Panc1 (cell line): ENCODE measurements at regions of chr1 and their contacts with region 1.

Region 1: GRCh38 chr1:156860113-156860627 is 495 bp upstream of the NTRK1 start:
- DNase-seq: no peak
- ATAC-seq: peak; percentile 80
- H3K4me3 ChIP-seq: peak overlapping the region; percentile 39 to 65
- H3K27ac ChIP-seq: no peak overlapping the region
- H3K4me1 ChIP-seq: peaks cover 13% of the 10 kb centered on the region
- H3K27me3 ChIP-seq: no peaks in the 10 kb centered on the region; the same call in 1 of the 2 replicates
- CTCF ChIP-seq: peak; percentile 97

Region 2: GRCh38 chr1:156725683-156726280 is 134.4 kb before region 1 on chr1:
- CTCF ChIA-PET with region 1: interaction called, 27 read pairs
- POLR2A ChIA-PET with region 1: interaction called, 3 read pairs
- in situ Hi-C with region 1: no loop called
- intact Hi-C with region 1: loop called (anchors 2 kb)
- DNase-seq: peak; percentile 77
- ATAC-seq: peak; percentile 78
- H3K4me3 ChIP-seq: peak overlapping the region; percentile 87 to 99
- H3K27ac ChIP-seq: peak overlapping the region; percentile 87
- H3K4me1 ChIP-seq: peaks cover 33% of the 10 kb centered on the region
- H3K27me3 ChIP-seq: no peaks in the 10 kb centered on the region
- CTCF ChIP-seq: peak; percentile 91

Region 3: GRCh38 chr1:156797212-156797871 is 62.8 kb before region 1 on chr1:
- CTCF ChIA-PET with region 1: interaction called, 7 read pairs
- POLR2A ChIA-PET with region 1: interaction called, 3 read pairs
- in situ Hi-C with region 1: no loop called
- intact Hi-C with region 1: loop called (anchors 2 kb)
- DNase-seq: peak; percentile 45
- ATAC-seq: peak; percentile 83
- H3K4me3 ChIP-seq: no peak overlapping the region
- H3K27ac ChIP-seq: no peak overlapping the region
- H3K4me1 ChIP-seq: no peaks in the 10 kb centered on the region
- H3K27me3 ChIP-seq: no peaks in the 10 kb centered on the region
- CTCF ChIP-seq: peak; percentile 86

Region 4: GRCh38 chr1:156838981-156839410 is 21.2 kb before region 1 on chr1:
- CTCF ChIA-PET with region 1: interaction called, 39 read pairs
- POLR2A ChIA-PET with region 1: no interaction called
- in situ Hi-C with region 1: no loop called
- intact Hi-C with region 1: no loop called
- DNase-seq: peak; percentile 27
- ATAC-seq: peak; percentile 79
- H3K4me3 ChIP-seq: no peak overlapping the region
- H3K27ac ChIP-seq: no peak overlapping the region
- H3K4me1 ChIP-seq: no peaks in the 10 kb centered on the region
- H3K27me3 ChIP-seq: peaks cover 2% of the 10 kb centered on the region
- CTCF ChIP-seq: peak; percentile 96

Region 5: DNA sequence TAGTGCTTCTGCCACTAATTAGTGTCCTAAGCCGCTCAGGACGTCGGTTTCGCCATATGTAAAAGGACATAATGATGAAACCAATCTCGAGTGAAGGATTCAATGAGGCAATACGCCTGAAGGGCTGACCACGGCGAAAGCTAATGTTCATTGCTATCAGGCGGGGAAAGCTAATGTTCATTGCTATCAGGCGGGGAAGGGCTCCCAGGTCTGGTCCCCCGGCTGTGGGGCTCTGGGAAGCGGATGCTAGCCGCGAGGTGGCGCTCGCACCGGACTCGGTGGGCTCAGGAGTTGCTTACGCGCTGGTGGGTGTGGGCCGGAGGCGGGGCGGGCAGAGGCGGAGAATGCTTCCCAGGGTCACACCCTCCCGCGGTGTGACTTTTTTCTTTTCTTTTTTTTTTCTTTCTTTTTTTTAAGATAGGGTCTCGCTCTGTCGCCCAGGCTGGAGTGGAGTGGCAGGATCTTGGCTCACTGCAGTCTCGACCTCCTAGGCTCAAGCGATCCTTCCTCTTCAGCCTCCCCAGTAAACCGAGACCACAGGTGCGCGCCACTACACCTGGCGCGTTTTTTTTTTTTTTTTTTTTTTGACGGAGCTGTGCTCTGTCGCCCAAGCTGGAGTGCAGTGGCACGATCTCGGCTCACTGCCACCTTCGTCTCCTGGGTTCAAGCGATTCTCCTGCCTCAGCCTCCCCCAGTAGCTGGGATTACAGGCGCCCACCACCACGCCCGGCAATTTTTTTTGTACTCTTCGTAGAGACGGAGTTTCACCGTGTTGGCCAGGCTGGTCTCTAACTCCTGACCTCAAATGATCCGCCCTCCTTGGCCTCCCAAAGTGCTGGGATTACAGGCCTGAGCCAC is 32.2 kb after region 1 on chr1:
- CTCF ChIA-PET with region 1: interaction called, 10 read pairs
- POLR2A ChIA-PET with region 1: interaction called, 6 read pairs
- in situ Hi-C with region 1: no loop called
- intact Hi-C with region 1: no loop called
- DNase-seq: no peak
- ATAC-seq: peak; percentile 83
- H3K4me3 ChIP-seq: peak overlapping the region; percentile 31 to 62
- H3K27ac ChIP-seq: peak overlapping the region; percentile 56; the same call in 1 of the 2 replicates
- H3K4me1 ChIP-seq: peaks cover 42% of the 10 kb centered on the region
- H3K27me3 ChIP-seq: no peaks in the 10 kb centered on the region
- CTCF ChIP-seq: peak; percentile 95

Region 6: DNA sequence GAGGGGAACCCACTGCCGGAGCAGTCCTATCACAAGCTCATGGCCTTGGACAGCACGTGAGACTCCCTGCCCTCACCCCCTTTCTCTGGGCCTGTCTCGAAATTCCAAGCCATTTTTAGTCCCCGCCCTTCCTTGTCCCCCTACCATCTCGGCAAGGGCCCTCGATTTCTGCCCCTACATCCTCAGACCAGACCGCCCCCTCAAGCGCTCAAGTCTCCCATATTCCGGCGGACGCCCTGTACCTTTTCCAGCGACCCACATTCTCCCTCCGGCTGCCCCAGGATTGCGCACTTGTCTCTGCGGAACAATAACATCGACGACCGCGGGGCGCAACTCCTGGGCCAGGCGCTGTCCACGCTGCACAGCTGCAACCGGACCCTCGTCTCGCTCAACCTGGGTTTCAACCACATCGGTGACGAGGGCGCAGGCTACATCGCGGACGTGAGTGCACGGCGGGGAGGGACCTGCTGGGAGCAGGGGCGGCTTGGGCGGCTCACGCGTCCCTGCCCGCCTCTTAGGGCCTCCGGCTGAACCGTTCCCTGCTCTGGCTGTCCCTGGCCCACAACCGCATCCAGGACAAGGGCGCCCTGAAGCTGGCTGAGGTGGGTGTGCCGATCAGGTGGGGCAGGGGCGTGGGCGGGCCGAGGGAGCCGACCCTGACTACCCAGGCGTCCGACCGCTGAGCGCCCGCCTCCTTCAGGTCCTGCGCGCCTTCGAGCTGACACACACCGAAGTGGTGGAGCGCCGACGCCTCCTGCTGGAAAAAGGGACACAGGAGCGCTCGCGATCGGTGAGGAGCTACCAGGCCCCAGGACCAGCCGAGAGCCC is 67.3 kb after region 1 on chr1:
- CTCF ChIA-PET with region 1: interaction called, 4 read pairs
- POLR2A ChIA-PET with region 1: no interaction called
- in situ Hi-C with region 1: no loop called
- intact Hi-C with region 1: loop called (anchors 10 kb)
- DNase-seq: peak; percentile 39
- ATAC-seq: peak; percentile 93
- H3K4me3 ChIP-seq: peak overlapping the region; percentile 50 to 60
- H3K27ac ChIP-seq: peak overlapping the region; percentile 44; the same call in 1 of the 2 replicates
- H3K4me1 ChIP-seq: peaks cover 3% of the 10 kb centered on the region; the same call in 1 of the 2 replicates
- H3K27me3 ChIP-seq: no peaks in the 10 kb centered on the region
- CTCF ChIP-seq: peak; percentile 97

Region 7: GRCh38 chr1:156970017-156970416 is 109.8 kb after region 1 on chr1:
- CTCF ChIA-PET with region 1: no interaction called
- POLR2A ChIA-PET with region 1: no interaction called
- in situ Hi-C with region 1: no loop called
- intact Hi-C with region 1: no loop called
- DNase-seq: no peak
- ATAC-seq: no peak
- H3K4me3 ChIP-seq: no peak overlapping the region
- H3K27ac ChIP-seq: no peak overlapping the region
- H3K4me1 ChIP-seq: no peaks in the 10 kb centered on the region
- H3K27me3 ChIP-seq: no peaks in the 10 kb centered on the region
- CTCF ChIP-seq: peak; percentile 28; the same call in 1 of the 2 replicates

Region 8: GRCh38 chr1:157019457-157019856 is 159.3 kb after region 1 on chr1:
- CTCF ChIA-PET with region 1: interaction called, 17 read pairs
- POLR2A ChIA-PET with region 1: no interaction called
- in situ Hi-C with region 1: no loop called
- intact Hi-C with region 1: no loop called
- DNase-seq: no peak
- ATAC-seq: no peak
- H3K4me3 ChIP-seq: no peak overlapping the region
- H3K27ac ChIP-seq: no peak overlapping the region
- H3K4me1 ChIP-seq: no peaks in the 10 kb centered on the region
- H3K27me3 ChIP-seq: no peaks in the 10 kb centered on the region
- CTCF ChIP-seq: no peak

Region 9: GRCh38 chr1:157124855-157125254 is 264.7 kb after region 1 on chr1:
- CTCF ChIA-PET with region 1: no interaction called
- POLR2A ChIA-PET with region 1: no interaction called
- in situ Hi-C with region 1: no loop called
- intact Hi-C with region 1: no loop called
- DNase-seq: no peak
- ATAC-seq: no peak
- H3K4me3 ChIP-seq: no peak overlapping the region
- H3K27ac ChIP-seq: no peak overlapping the region
- H3K4me1 ChIP-seq: no peaks in the 10 kb centered on the region
- H3K27me3 ChIP-seq: no peaks in the 10 kb centered on the region
- CTCF ChIP-seq: no peak